ENCODE measurements at regions of chr1 and their contacts with region 1.

Region 1: DNA sequence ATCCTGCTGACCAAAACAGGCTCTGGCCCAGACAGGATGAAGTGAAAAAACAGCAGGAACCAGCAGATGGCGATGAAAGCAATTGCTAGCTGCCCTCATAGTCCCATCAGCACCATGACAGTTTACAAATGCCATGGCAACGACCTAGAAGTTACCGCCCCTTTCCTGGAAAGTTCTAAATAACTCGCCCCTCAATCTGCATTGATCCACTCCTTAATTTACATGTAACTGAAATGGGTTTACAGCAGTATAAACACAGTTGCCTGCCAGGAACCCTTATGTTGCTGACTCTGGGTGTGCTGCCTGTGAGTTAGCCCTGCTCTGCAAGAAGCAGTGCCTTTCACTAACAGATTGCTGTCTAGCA is 65.5 kb upstream of the CR1L start:
- ATAC-seq: peak; percentile 32 to 98 (median 68)
- H3K4me3 ChIP-seq: no peak overlapping the region
- H3K27ac ChIP-seq: no peak overlapping the region
- H3K4me1 ChIP-seq: no peaks in the 10 kb centered on the region

Region 2: GRCh38 chr1:207698822-207699483 is 119.5 kb after region 1 on chr1:
- in situ Hi-C with region 1: loop called in 1 of 9 experiments (anchors 25 kb)
- ATAC-seq: peak; percentile 29 to 98 (median 64)
- H3K4me3 ChIP-seq: no peak overlapping the region
- H3K27ac ChIP-seq: no peak overlapping the region
- H3K4me1 ChIP-seq: no peaks in the 10 kb centered on the region

Region 3: DNA sequence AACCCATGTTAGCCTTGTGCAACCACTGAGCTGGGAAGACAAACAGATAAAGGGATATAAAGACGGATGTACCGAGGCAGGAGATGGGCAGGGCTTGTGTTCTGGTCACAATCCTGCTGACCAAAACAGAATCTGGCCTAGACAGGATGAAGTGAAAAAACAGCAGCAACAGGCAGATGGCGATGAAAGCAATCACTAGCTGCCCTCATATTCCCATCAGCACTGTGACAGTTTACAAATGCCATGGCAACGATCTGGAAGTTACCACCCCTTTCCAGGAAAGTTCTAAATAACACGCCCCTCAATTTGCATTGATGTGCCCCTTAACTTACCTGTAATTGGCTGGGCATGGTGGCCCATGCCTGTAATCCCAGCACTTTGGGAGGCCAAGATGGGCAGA is 131.9 kb after region 1 on chr1:
- in situ Hi-C with region 1: no loop called
- ATAC-seq: peak in 4 of 8 experiments; percentile 26 to 86 (median 83)
- H3K4me3 ChIP-seq: no peak overlapping the region
- H3K27ac ChIP-seq: no peak overlapping the region
- H3K4me1 ChIP-seq: no peaks in the 10 kb centered on the region

Region 4: DNA sequence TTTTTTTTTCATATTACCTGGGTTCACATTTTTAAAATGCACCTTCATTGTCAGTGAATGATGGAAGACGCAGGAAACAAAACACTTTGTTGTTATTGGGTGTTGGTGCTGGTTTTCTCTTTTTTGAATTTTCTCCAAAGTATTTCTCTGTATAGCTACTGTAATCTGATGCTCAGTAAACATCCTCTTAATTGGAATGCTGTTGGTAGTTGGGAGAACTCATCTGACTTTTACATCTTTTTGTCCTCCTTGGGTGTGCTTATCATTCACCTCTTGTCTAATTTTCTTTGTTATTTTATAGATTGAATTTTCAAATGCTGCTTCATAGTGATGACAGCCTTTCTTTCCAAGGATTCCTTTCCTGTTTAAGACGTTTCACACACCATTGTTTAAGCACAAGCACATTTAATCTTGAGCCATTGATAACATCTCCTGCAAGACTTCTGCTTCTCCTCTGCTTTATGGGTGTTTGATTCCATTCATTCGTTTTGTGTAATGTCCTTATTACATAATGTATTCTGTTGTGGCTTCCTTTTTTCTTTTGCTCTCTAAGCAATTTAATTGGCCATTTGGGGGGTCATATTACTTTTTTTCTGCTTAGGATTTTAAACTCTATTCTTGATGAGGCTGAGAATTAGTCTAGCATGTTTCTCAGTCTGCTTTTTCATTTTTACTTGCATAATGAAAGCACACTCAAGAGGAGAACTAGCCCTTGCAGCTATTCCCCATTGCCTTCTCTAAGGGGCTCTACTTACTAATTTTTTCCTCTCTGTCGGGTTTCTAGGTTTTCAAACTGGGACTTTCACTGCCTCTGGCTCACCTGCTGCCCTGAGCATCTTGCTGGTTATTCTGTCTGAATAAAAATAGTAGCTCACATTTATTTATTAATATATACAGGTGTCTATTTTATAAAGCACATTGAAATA is 373.5 kb after region 1 on chr1:
- in situ Hi-C with region 1: no loop called
- ATAC-seq: no peak
- H3K4me3 ChIP-seq: no peak overlapping the region
- H3K27ac ChIP-seq: no peak overlapping the region
- H3K4me1 ChIP-seq: no peaks in the 10 kb centered on the region

Measured in motor neuron (in vitro differentiated cells).